AG04450 (cell line): ENCODE measurements at regions of chr1 and their contacts with region 1.

Region 1: GRCh38 chr1:40315239-40315794 is 1.8 kb downstream of the COL9A2 start:
- DNase-seq: peak; percentile 70
- H3K4me3 ChIP-seq: peak overlapping the region; percentile 32; the same call in 1 of the 2 replicates
- H3K27ac ChIP-seq: peak overlapping the region; percentile 52
- H3K27me3 ChIP-seq: peaks cover 33% of the 10 kb centered on the region
- CTCF ChIP-seq: peak; percentile 91

Region 2: DNA sequence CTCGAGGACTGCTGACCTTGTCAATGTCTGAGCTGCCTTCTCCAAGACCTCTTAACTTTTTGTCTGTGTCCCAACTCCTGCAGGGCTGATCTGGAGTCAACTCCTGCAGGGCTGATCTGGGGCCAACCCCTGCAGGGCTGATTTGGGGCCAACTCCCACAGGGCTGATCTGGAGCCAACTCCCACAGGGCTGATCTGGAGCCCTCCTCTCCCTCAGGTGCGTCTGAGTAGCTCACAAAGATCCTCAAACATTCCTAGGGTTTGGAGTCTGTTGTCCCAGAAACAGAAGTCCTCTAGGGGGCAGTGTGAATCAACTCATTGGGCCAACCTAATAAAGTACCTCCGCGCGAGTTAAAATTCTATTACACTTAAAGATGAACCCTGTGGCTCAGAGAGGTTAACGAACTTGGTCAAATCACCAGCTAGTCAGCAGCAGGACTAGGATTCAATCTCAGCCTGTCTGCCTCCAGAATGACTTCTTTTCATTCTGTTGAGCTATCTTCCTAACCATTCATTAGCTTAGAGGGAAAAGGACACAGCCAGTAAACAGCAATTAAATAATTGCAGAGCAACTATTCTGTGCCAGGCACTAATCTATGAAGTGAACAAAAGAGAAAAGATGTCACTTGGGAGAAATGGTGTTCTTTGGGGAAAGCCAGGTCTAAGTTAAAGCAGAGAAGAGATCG is 171.3 kb before region 1 on chr1:
- CTCF ChIA-PET with region 1: interaction called, 32 read pairs
- POLR2A ChIA-PET with region 1: no interaction called
- DNase-seq: peak; percentile 36
- H3K4me3 ChIP-seq: no peak overlapping the region
- H3K27ac ChIP-seq: no peak overlapping the region
- H3K27me3 ChIP-seq: peaks cover 30% of the 10 kb centered on the region
- CTCF ChIP-seq: peak; percentile 85

Region 3: DNA sequence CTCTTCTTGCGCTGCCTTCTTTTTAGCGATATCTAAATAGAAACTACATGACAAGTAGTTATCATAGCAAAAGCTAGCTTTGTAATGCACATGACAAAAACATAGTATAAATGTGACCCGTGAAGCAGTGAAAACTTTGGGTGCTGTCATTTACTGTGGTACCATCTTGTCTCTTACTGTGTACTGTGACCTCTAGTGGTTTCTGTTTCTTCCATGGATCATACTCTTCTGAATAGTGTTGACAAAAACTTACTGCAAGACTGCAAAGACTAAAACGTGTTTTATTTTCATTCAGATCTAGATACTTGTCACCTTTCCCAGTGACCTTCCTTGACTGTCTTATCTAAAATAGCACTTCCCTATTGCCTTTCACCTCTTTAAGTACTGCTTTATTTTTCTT is 148.0 kb before region 1 on chr1:
- CTCF ChIA-PET with region 1: interaction called, 11 read pairs
- POLR2A ChIA-PET with region 1: no interaction called
- DNase-seq: no peak
- H3K4me3 ChIP-seq: no peak overlapping the region
- H3K27ac ChIP-seq: no peak overlapping the region
- H3K27me3 ChIP-seq: no peaks in the 10 kb centered on the region
- CTCF ChIP-seq: no peak

Region 4: GRCh38 chr1:40267767-40268187 is 47.5 kb before region 1 on chr1:
- CTCF ChIA-PET with region 1: interaction called, 14 read pairs
- POLR2A ChIA-PET with region 1: no interaction called
- DNase-seq: peak; percentile 87
- H3K4me3 ChIP-seq: no peak overlapping the region
- H3K27ac ChIP-seq: no peak overlapping the region
- H3K27me3 ChIP-seq: no peaks in the 10 kb centered on the region
- CTCF ChIP-seq: no peak

Region 5: DNA sequence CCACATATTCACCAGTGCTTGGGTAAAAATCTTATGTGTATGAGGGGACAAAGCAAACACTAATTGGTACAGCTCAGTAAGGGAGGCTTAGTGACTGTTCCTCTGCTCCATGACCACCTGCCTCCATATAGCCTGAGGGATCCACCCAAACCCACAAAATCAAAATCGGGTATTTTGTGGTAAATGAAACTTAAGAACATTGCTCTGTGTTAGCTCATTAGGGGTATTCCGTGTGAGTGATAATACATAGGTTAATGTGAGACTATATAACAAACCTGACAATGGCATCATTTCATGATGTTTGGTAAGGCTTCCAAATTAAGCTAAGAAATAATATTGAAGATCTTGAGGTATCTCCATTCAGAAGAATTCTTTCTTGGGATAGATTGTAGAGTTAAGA is 24.0 kb before region 1 on chr1:
- CTCF ChIA-PET with region 1: interaction called, 17 read pairs
- POLR2A ChIA-PET with region 1: interaction called, 4 read pairs
- DNase-seq: no peak
- H3K4me3 ChIP-seq: no peak overlapping the region
- H3K27ac ChIP-seq: no peak overlapping the region
- H3K27me3 ChIP-seq: no peaks in the 10 kb centered on the region
- CTCF ChIP-seq: no peak

Region 6: GRCh38 chr1:40357625-40358024 is 42.3 kb after region 1 on chr1:
- CTCF ChIA-PET with region 1: no interaction called
- POLR2A ChIA-PET with region 1: no interaction called
- DNase-seq: no peak
- H3K4me3 ChIP-seq: no peak overlapping the region
- H3K27ac ChIP-seq: no peak overlapping the region
- H3K27me3 ChIP-seq: peaks cover 6% of the 10 kb centered on the region
- CTCF ChIP-seq: no peak

Region 7: GRCh38 chr1:40385437-40386358 is 70.4 kb after region 1 on chr1:
- CTCF ChIA-PET with region 1: interaction called, 16 read pairs
- POLR2A ChIA-PET with region 1: no interaction called
- DNase-seq: no peak
- H3K4me3 ChIP-seq: no peak overlapping the region
- H3K27ac ChIP-seq: no peak overlapping the region
- H3K27me3 ChIP-seq: no peaks in the 10 kb centered on the region
- CTCF ChIP-seq: no peak

Region 8: GRCh38 chr1:40495315-40495903 is 180.1 kb after region 1 on chr1:
- CTCF ChIA-PET with region 1: no interaction called
- POLR2A ChIA-PET with region 1: no interaction called
- DNase-seq: no peak
- H3K4me3 ChIP-seq: no peak overlapping the region
- H3K27ac ChIP-seq: no peak overlapping the region
- H3K27me3 ChIP-seq: no peaks in the 10 kb centered on the region
- CTCF ChIP-seq: no peak